ENCODE measurements at regions of chr11 and their contacts with region 1.

Region 1: DNA sequence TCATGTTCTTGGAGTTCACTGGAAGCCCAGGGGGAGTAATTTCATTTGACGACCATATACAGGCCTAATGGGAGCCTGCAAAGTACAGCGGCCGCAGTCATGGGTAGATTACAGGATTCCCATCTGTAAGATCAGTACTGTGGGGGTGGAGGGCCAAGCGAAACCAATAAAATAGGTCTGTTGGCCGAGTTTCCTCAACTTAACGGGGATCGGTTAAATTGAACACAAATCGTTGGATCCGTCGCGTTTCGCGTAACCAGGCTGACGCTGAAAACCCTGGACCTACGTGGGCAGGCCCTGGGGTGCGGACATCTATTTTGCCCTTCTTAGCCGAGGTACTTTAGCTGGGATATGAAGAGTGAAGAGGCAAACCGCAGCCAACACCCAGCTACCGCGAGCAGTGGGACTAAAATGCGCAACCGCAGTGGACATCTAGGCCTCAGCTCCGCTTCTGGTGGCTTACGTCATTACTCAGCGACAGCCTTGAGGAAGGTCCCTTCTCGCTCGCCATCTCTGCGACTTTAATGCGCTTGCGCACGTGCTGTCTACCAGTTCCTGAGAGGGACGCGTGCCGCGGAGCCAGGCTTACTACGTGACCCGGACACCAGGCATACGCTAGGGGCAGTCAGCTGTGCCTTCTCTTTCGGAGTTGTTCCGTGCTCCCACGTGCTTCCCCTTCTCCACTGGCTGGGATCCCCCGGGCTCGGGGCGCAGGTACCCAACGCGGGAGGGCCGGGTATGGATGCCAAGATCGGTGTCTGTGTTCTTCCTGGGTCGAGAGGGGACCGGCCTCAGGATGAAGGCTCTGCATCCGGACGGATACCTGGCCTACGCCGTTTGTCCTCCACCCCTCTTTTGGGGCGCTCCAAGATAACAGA is at the start of gene NAT10:
- H3K4me3 ChIP-seq: peak within 1 kb of the TSS; percentile 79
- H3K27ac ChIP-seq: peak within 1 kb of the TSS; percentile 80
- H3K4me1 ChIP-seq: no peaks in the 10 kb centered on the region
- CTCF ChIP-seq: peak; percentile 85

Region 2: GRCh38 chr11:33930317-33931021 is 174.8 kb before region 1 on chr11:
- CTCF ChIA-PET with region 1: no interaction called
- POLR2A ChIA-PET with region 1: no interaction called
- H3K4me3 ChIP-seq: no peak overlapping the region
- H3K27ac ChIP-seq: no peak overlapping the region
- H3K4me1 ChIP-seq: no peaks in the 10 kb centered on the region
- CTCF ChIP-seq: no peak

Region 3: GRCh38 chr11:34051349-34052035 is 53.8 kb before region 1 on chr11 and contains the start of gene CAPRIN1:
- CTCF ChIA-PET with region 1: no interaction called
- POLR2A ChIA-PET with region 1: interaction called, 13 read pairs
- H3K4me3 ChIP-seq: peak within 1 kb of the TSS; percentile 98
- H3K27ac ChIP-seq: peak within 1 kb of the TSS; percentile 97
- H3K4me1 ChIP-seq: peaks cover 12% of the 10 kb centered on the region
- CTCF ChIP-seq: no peak

Region 4: GRCh38 chr11:34063061-34063795 is 42.1 kb before region 1 on chr11:
- CTCF ChIA-PET with region 1: no interaction called
- POLR2A ChIA-PET with region 1: no interaction called
- H3K4me3 ChIP-seq: no peak overlapping the region
- H3K27ac ChIP-seq: no peak overlapping the region
- H3K4me1 ChIP-seq: peaks cover 2% of the 10 kb centered on the region; the same call in 1 of the 2 replicates
- CTCF ChIP-seq: no peak

Region 5: GRCh38 chr11:34149786-34150185 is 44.5 kb after region 1 on chr11:
- CTCF ChIA-PET with region 1: no interaction called
- POLR2A ChIA-PET with region 1: no interaction called
- H3K4me3 ChIP-seq: no peak overlapping the region
- H3K27ac ChIP-seq: no peak overlapping the region
- H3K4me1 ChIP-seq: no peaks in the 10 kb centered on the region
- CTCF ChIP-seq: peak; percentile 63; the same call in 1 of the 2 replicates

Measured in HEK293 (cell line).